Activated naive CD4-positive, alpha-beta T cell treated with anti-CD3 and anti-CD28 coated beads for 36 hours (primary cell): ENCODE measurements at regions of chr6 and their contacts with region 1.

Region 1: GRCh38 chr6:26457806-26458688 is at the start of gene BTN2A1:
- DNase-seq: peak; percentile 84
- H3K4me3 Mint-ChIP-seq: peak within 1 kb of the TSS; percentile 96
- H3K27ac Mint-ChIP-seq: peak within 1 kb of the TSS; percentile 96
- H3K4me1 Mint-ChIP-seq: peaks cover 48% of the 10 kb centered on the region
- H3K27me3 Mint-ChIP-seq: no peaks in the 10 kb centered on the region
- total RNA-seq, gene BTN2A1: 16.0 TPM

Region 2: DNA sequence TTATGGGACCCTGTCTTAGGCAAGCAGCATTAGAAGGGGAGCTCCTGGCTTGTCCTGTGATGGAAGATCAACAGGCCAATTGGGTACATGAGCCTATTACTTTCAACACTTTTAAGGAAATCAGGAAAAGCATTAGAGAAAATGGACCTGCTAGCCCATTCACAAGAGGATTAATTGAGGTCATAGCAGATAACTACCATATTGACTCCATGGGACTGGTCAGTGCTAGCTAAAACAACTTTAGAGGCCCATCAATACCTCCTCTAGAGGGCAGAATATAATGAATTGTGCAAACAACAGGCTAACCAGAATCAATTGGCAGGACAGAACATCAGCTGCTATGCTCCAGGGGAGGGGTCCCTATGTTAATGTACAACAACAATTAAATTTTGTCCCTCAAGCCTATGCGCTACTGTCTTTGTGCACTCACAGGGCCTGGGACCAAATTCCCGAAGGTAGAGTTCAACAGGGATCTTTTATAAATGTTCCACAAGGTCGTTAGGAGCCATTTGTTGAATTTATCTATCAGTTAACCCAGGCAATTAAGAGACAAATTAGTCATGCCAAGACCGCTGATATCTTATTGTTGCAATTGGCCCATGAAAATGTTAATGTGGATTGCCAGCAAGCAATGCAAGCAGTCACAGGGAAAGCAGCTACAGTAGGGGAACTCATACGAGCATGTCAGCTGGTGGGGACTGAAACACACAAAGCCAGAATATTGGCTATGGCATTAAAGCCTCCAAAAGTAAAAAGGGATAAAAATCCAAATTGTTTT is 199.7 kb before region 1 on chr6:
- CTCF ChIA-PET with region 1: no interaction called
- intact Hi-C with region 1: no loop called
- DNase-seq: no peak
- H3K4me3 Mint-ChIP-seq: no peak overlapping the region
- H3K27ac Mint-ChIP-seq: no peak overlapping the region
- H3K4me1 Mint-ChIP-seq: peaks cover under 1% of the 10 kb centered on the region
- H3K27me3 Mint-ChIP-seq: peaks cover 3% of the 10 kb centered on the region

Region 3: DNA sequence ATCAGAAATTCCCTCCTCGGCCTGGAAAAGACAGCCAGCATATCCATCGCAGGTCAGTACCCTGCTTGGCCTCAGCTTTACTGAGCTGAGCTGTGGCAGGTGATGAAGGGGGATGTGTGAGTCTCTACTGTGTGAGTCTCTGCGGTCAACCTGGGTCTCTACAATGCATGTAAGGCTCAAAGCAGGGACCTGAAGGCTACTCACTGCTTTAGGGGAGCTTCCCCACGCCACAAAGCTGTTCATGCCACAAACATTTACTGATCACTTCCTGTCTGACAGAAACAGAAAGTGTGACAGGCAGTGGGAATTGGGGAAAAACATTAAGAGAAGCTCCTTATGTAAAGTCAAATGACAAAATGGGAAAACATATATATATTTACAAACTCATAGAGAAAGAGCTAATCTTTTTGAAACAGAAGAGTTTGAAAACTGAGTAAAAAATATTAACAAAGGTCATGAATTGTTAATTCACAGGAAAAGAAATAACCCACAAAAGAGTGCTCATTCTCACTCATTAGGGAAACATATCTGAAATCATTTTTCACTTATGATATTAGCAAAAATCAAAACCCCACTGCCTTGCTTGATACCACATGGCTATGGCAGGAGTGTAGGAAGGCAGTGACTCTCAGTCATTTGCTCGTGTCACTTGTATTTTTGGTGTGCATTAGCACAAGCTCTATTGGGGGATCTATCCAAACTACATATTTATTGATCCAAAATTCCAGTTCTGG is 11.9 kb before region 1 on chr6:
- CTCF ChIA-PET with region 1: no interaction called
- intact Hi-C with region 1: loop called (anchors 1 kb)
- DNase-seq: peak; percentile 57
- H3K4me3 Mint-ChIP-seq: peak overlapping the region; percentile 14
- H3K27ac Mint-ChIP-seq: peak overlapping the region; percentile 39
- H3K4me1 Mint-ChIP-seq: peaks cover 58% of the 10 kb centered on the region
- H3K27me3 Mint-ChIP-seq: no peaks in the 10 kb centered on the region

Region 4: DNA sequence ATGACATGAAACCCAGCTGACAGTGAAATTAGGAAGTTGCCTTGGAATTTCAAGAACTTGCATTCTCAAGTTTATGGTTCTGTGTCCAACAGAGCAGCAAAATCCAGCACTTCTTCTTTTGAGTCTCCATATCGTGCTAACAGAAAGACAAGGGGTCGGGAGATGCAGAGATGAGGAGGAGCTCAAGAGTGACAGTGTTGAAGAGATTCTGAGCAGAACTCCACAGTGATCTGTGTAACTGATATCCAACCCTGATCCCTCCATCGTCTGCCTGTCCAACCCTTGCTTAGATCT is 20.9 kb after region 1 on chr6:
- CTCF ChIA-PET with region 1: no interaction called
- intact Hi-C with region 1: no loop called
- DNase-seq: no peak
- H3K4me3 Mint-ChIP-seq: no peak overlapping the region
- H3K27ac Mint-ChIP-seq: no peak overlapping the region
- H3K4me1 Mint-ChIP-seq: peaks cover 27% of the 10 kb centered on the region
- H3K27me3 Mint-ChIP-seq: no peaks in the 10 kb centered on the region